Caco-2 (cell line): ENCODE measurements at regions of chr11 and their contacts with region 1.

Region 1: DNA sequence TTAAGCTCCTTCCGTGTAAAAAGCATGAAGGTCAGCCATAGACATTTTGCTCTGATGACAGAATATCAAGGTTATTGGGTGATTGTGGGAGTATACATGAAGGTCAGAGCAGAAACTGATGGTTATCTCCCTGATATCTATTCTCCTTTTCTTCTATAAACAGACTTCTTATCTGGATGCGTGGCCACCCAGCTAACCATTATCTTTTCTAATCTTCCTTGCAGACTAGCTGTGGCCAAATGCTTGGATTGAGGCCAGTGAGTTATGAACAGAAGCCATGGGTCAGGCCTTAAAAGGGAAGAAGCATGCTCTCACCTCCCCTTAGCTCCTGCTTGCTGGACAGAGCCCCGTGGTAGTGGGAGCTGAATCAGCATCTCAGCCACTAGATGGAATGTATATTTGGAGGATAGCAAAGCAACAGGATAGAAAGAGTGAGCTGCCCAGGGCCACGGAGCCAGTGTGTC is 31.3 kb upstream of the LRRC55 start:
- DNase-seq: no peak
- H3K4me3 ChIP-seq: no peak overlapping the region
- H3K4me3 Mint-ChIP-seq: no peak overlapping the region
- H3K27ac Mint-ChIP-seq: no peak overlapping the region
- H3K4me1 ChIP-seq: 0 out of 2 replicates have a peak, but pooled peaks cover 6% of the 10 kb centered on the region
- H3K4me1 Mint-ChIP-seq: no peaks in the 10 kb centered on the region
- H3K27me3 ChIP-seq: peaks cover 2% of the 10 kb centered on the region; the same call in 1 of the 2 replicates
- H3K27me3 Mint-ChIP-seq: peaks cover 26% of the 10 kb centered on the region
- CTCF ChIP-seq: no peak

Region 2: GRCh38 chr11:57031556-57031955 is 118.9 kb before region 1 on chr11:
- CTCF ChIA-PET with region 1: no interaction called
- POLR2A ChIA-PET with region 1: no interaction called
- intact Hi-C with region 1: no loop called
- DNase-seq: no peak
- H3K4me3 ChIP-seq: no peak overlapping the region
- H3K4me3 Mint-ChIP-seq: no peak overlapping the region
- H3K27ac Mint-ChIP-seq: no peak overlapping the region
- H3K4me1 ChIP-seq: no peaks in the 10 kb centered on the region
- H3K4me1 Mint-ChIP-seq: no peaks in the 10 kb centered on the region
- H3K27me3 ChIP-seq: no peaks in the 10 kb centered on the region
- H3K27me3 Mint-ChIP-seq: no peaks in the 10 kb centered on the region
- CTCF ChIP-seq: no peak

Region 3: DNA sequence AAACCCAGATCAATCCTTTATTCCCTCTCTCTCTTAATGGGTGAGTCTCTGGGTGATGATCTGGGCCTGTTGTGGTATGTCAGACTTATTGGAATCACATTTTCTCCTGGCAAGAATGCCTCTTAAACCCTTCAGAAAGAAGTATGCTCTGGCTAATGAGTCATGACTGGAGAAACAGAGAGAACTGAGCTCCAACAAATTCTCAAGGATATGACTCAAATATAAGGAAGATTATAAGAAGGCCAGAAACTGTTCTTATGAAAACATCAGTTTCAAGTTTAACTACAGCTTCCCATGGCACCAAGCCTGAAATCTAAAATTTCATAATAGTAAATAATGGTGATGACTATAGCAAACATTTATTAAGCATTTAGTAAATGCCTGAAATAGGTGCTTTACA is 77.8 kb before region 1 on chr11:
- CTCF ChIA-PET with region 1: no interaction called
- POLR2A ChIA-PET with region 1: no interaction called
- intact Hi-C with region 1: no loop called
- DNase-seq: no peak
- H3K4me3 ChIP-seq: no peak overlapping the region
- H3K4me3 Mint-ChIP-seq: no peak overlapping the region
- H3K27ac Mint-ChIP-seq: no peak overlapping the region
- H3K4me1 ChIP-seq: no peaks in the 10 kb centered on the region
- H3K4me1 Mint-ChIP-seq: no peaks in the 10 kb centered on the region
- H3K27me3 ChIP-seq: no peaks in the 10 kb centered on the region
- H3K27me3 Mint-ChIP-seq: no peaks in the 10 kb centered on the region
- CTCF ChIP-seq: no peak

Region 4: GRCh38 chr11:57167125-57167846 is 16.8 kb after region 1 on chr11:
- CTCF ChIA-PET with region 1: no interaction called
- POLR2A ChIA-PET with region 1: no interaction called
- intact Hi-C with region 1: loop called (anchors 2 kb)
- DNase-seq: no peak
- H3K4me3 ChIP-seq: no peak overlapping the region
- H3K4me3 Mint-ChIP-seq: no peak overlapping the region
- H3K27ac Mint-ChIP-seq: no peak overlapping the region
- H3K4me1 ChIP-seq: no peaks in the 10 kb centered on the region
- H3K4me1 Mint-ChIP-seq: peaks cover 5% of the 10 kb centered on the region
- H3K27me3 ChIP-seq: no peaks in the 10 kb centered on the region
- H3K27me3 Mint-ChIP-seq: peaks cover 4% of the 10 kb centered on the region
- CTCF ChIP-seq: no peak